ENCODE measurements at regions of chr1 and their contacts with region 1.

Region 1: GRCh38 chr1:108643492-108644335 is 17.2 kb downstream of the HENMT1 start:
- DNase-seq: no peak
- H3K4me3 ChIP-seq: no peak overlapping the region
- H3K27ac ChIP-seq: no peak overlapping the region
- H3K4me1 ChIP-seq: no peaks in the 10 kb centered on the region
- H3K27me3 ChIP-seq: no peaks in the 10 kb centered on the region
- CTCF ChIP-seq: peak; percentile 46 to 59 (median 53)
- EP300 ChIP-seq: no peak
- POLR2A ChIP-seq: no peak

Region 2: DNA sequence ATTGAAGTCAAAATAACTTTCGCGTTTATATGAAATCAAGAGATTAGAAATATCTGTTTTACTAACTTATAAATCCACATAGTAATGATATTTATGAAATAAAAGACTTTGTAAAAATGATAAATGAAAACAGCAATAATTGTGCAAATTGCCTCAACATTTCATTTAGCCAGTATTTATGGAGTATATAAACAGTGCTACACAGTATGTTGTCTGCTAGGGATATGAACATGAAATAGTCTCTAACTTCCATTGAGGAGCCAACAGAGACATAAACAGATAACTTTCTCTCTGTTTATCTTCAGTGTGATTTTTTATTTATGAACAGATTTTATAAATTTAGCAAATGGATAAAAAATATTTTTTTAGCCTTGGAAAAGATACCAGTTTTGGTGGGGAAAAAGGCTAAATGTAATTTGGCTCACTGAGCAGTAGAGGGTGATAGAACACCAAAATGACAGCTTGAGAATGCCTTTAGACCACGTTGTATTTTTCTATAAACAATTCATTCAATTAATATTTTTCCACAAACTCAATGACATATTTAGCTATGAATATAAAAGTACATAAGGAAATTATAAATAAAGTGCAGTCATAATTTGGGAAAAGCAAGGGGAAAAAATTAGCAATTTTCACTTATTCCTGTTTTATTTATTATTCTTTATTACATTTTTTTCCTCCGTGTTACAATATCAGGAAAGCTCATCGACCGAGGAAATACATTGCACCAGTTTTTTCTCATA is 131.3 kb before region 1 on chr1:
- intact Hi-C with region 1: loop called (anchors 1 kb)
- DNase-seq: no peak
- H3K4me3 ChIP-seq: no peak overlapping the region
- H3K27ac ChIP-seq: no peak overlapping the region
- H3K4me1 ChIP-seq: no peaks in the 10 kb centered on the region
- H3K27me3 ChIP-seq: no peaks in the 10 kb centered on the region
- CTCF ChIP-seq: peak; percentile 63 to 78 (median 68)
- EP300 ChIP-seq: no peak
- POLR2A ChIP-seq: no peak

Region 3: DNA sequence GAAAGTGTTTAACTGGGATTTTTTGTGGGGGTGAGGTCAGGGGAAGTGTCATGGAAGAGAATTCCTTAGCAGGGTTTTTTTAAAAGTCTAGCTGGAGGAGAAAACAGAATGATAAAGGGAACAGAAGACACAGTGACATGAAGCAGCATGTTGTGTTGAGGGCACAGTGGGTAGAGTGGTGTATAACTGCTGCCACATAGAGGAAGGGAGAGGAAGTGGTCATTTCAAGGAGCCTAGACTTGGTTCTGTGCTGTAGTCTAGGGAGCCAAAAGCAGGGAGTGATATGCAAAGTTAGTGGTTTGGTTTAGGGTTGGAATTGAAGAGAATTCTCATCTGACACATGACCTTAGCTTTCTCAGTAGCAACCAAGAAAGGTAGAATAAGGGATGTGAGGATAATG is 73.6 kb before region 1 on chr1:
- intact Hi-C with region 1: no loop called
- DNase-seq: no peak
- H3K4me3 ChIP-seq: no peak overlapping the region
- H3K27ac ChIP-seq: no peak overlapping the region
- H3K4me1 ChIP-seq: peaks cover 0 to 6% (median 0%) of the 10 kb centered on the region in 4 donors
- H3K27me3 ChIP-seq: no peaks in the 10 kb centered on the region
- CTCF ChIP-seq: peak in 1 of 4 experiments; percentile 4
- EP300 ChIP-seq: no peak
- POLR2A ChIP-seq: no peak

Measured in sigmoid colon (tissue), 7 donors.